ENCODE measurements at regions of chr2 and their contacts with region 1.

Region 1: DNA sequence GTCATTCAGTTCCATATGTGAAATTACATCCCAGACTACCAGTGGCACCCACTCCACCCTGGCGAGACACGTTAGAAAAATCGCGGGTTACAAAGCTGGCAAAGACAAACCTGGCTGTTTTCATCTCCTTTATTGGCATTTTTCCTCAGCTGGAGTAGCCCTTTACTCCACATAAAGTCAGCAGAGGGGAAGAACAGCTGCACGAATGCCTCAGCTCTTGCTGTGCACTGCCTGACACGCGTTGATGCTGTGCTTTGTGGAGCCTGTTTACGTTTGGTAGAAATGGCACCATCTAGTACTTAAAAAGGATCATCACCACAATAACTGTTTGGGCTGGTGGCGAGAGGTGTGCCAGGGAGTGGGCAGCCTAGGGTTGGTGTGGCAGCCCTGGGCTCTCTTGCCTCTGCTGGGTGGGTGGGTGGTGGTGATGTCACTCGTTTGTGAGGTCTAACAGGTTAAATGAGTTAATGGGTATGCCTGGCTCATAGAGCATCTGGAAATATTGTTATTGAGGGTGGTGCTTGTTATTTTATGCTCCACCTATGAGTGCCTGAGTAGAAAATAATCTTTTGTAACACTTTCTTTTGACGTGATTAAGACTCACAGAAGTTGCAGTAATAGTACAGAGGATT is 16.4 kb downstream of the FARP2 start:
- DNase-seq: no peak
- ATAC-seq: no peak
- H3K4me3 Mint-ChIP-seq: no peak overlapping the region
- H3K27ac Mint-ChIP-seq: peak overlapping the region; percentile 46
- H3K4me1 Mint-ChIP-seq: peaks cover 68% of the 10 kb centered on the region
- H3K27me3 Mint-ChIP-seq: no peaks in the 10 kb centered on the region
- CTCF ChIP-seq: no peak

Region 2: DNA sequence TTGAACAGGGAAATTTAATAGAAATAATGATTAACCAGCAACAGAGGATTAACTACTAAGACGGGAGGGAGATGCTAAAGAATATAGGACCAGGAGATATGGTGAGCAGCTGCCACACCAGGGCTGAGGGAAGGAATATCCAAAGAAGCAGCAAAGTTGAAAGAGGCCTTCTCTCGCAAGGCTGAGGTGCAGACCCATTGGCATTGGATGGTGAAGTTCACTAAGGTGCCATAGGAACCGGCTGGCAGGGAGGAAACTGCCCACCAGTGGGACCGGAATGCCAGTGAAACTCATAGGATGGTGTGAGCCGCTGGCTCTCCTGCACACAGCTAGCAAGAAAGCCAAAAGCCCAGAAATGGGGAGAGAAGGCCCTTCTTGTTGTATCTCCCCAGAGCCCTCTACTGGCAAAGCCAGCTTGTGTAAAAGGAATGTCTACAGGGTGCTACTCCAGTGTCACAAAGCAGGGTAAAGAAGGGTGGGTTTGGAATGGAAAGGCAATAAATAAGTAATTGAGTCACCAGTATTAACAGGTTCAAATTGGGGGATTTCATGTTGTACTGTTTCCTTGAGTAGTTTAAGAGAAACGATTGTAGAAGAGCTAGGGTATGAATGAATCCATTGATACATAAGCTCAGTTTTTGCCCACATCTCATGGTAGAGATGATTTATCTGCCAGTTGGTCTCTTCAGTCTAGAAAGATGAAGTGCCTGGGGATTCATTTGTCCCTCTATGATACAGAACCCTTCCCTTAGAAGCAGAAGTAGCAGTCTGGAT is 19.6 kb after region 1 on chr2:
- CTCF ChIA-PET with region 1: interaction called, 3 read pairs
- POLR2A ChIA-PET with region 1: interaction called, 3 read pairs
- intact Hi-C with region 1: loop called (anchors 2 kb)
- DNase-seq: no peak
- ATAC-seq: peak; percentile 19
- H3K4me3 Mint-ChIP-seq: no peak overlapping the region
- H3K27ac Mint-ChIP-seq: peak overlapping the region; percentile 73
- H3K4me1 Mint-ChIP-seq: peaks cover 54% of the 10 kb centered on the region
- H3K27me3 Mint-ChIP-seq: no peaks in the 10 kb centered on the region
- CTCF ChIP-seq: no peak

Measured in activated B cell treated with CpG ODN at 0.5 μM for 24 hours (primary cell).